Heart left ventricle (tissue), 16 donors: ENCODE measurements at regions of chr9 and their contacts with region 1.

Region 1: GRCh38 chr9:16726718-16727451 is 143.6 kb downstream of the BNC2 start:
- DNase-seq: peak; percentile 58 to 82 (median 78)
- ATAC-seq: peak; percentile 25 to 92 (median 86)
- H3K4me3 ChIP-seq: peak overlapping the region; percentile 18 to 70 (median 58)
- H3K27ac ChIP-seq: peak overlapping the region; percentile 52 to 88 (median 79)
- H3K4me1 ChIP-seq: peaks cover 0 to 15% (median 1%) of the 10 kb centered on the region in 12 donors
- H3K27me3 ChIP-seq: peaks cover 0 to 30% (median 16%) of the 10 kb centered on the region in 9 donors
- CTCF ChIP-seq: no peak
- POLR2A ChIP-seq: peak in 1 of 2 donors; percentile 34

Region 2: GRCh38 chr9:16626577-16627131 is 100.2 kb before region 1 on chr9:
- intact Hi-C with region 1: loop called in 1 of 10 experiments (anchors 10 kb)
- DNase-seq: peak in 1 of 5 donors; percentile 45
- ATAC-seq: peak in 3 of 4 donors; percentile 73 to 89 (median 88)
- H3K4me3 ChIP-seq: no peak overlapping the region
- H3K27ac ChIP-seq: peak overlapping the region in 5 of 12 donors; percentile 8 to 68 (median 18)
- H3K4me1 ChIP-seq: peaks cover 0 to 35% (median 6%) of the 10 kb centered on the region in 12 donors
- H3K27me3 ChIP-seq: no peaks in the 10 kb centered on the region
- CTCF ChIP-seq: no peak
- POLR2A ChIP-seq: no peak

Region 3: GRCh38 chr9:16869882-16870595 is 143.2 kb after region 1 on chr9:
- intact Hi-C with region 1: loop called in 1 of 10 experiments (anchors 10 kb)
- DNase-seq: peak in 3 of 5 donors; percentile 8 to 64 (median 28)
- ATAC-seq: peak in 3 of 4 donors; percentile 24 to 44 (median 41)
- H3K4me3 ChIP-seq: peak overlapping the region; percentile 45 to 92 (median 64)
- H3K27ac ChIP-seq: peak overlapping the region in 11 of 12 donors; percentile 42 to 92 (median 65)
- H3K4me1 ChIP-seq: peaks cover 0 to 29% (median 5%) of the 10 kb centered on the region in 12 donors
- H3K27me3 ChIP-seq: peaks cover 3 to 49% (median 26%) of the 10 kb centered on the region in 9 donors
- CTCF ChIP-seq: no peak
- POLR2A ChIP-seq: no peak

Region 4: GRCh38 chr9:17045381-17045940 is 318.6 kb after region 1 on chr9:
- intact Hi-C with region 1: no loop called
- DNase-seq: no peak
- ATAC-seq: no peak
- H3K4me3 ChIP-seq: no peak overlapping the region
- H3K27ac ChIP-seq: no peak overlapping the region
- H3K4me1 ChIP-seq: no peaks in the 10 kb centered on the region
- H3K27me3 ChIP-seq: no peaks in the 10 kb centered on the region
- CTCF ChIP-seq: no peak
- POLR2A ChIP-seq: no peak